ENCODE measurements at regions of chr1 and their contacts with region 1.

Region 1: GRCh38 chr1:14800500-14801076 is 202.1 kb downstream of the KAZN start:
- DNase-seq: no peak
- ATAC-seq: no peak

Region 2: DNA sequence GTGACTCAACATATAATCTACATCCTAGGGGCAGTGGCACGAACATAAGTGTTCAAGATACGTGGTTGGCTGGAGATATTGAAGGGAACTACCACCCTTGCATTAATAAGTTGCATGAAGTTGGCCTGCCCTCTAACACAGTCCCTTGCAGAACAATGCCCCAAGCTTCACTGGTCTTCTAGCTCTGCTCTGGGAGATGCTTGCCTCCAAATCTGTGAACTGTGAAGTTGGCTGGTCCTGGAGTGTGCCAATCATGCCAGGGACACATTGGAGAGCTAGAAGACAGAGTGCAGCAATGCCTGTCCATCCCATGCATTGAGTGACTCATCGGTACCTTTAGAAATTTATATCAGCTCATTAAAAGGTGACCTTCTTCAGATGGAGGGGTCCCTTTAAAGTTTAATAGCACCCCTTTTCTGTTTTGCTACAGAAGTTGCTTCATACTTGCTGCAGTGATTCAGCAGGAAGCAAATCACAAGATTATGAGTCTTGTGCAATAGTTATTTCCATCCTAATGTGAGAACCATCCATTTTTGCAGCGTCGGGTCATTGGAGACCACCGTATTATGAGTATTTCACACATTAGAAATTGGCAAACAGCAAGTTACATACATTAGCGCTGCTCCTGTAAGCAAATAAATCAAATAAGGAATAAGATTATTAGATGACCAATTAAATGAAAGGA is 257.3 kb before region 1 on chr1:
- intact Hi-C with region 1: no loop called
- DNase-seq: no peak
- ATAC-seq: peak; percentile 42

Region 3: GRCh38 chr1:14778898-14779865 is 21.4 kb before region 1 on chr1:
- intact Hi-C with region 1: loop called (anchors 2 kb)
- DNase-seq: no peak
- ATAC-seq: no peak

Region 4: GRCh38 chr1:15128520-15129313 is 328.1 kb after region 1 on chr1:
- intact Hi-C with region 1: no loop called
- DNase-seq: peak; percentile 82
- ATAC-seq: peak; percentile 84

Measured in Right ventricle myocardium inferior (tissue), 1 donor.